Colonic mucosa (tissue), 4 donors: ENCODE measurements at regions of chr6 and their contacts with region 1.

Region 1: DNA sequence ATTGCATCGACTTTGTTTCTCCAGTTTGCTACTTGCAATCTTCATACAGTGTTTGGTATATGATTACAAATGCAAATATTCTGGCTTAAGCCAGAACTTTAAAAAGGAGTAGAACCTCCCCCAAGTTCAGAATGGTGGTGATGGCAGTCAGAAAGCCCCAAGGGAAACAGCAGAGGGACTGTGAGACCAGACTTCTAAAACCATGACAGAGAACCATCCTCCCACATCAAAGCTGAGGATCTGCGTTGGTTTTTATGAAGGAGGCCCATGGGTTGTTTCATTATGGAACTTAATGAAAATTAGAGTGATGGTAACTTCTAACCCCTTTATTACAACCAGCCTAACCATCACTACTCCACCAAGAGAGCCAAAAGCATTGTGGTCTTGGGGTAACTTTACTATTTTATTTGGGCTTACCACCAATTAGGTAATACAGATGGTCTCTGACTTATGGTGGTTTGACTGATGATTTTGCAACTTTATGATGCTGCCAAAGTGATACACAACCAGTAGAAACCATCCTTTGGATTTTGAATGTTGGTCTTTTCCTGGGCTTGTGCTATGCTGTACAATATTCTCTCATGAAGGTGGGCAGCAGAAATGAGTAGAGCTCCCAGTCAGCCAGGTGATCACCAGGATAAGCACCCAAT is 10.9 kb upstream of the MRS2 start:
- DNase-seq: no peak
- H3K4me3 ChIP-seq: no peak overlapping the region
- H3K27ac ChIP-seq: no peak overlapping the region
- H3K4me1 ChIP-seq: no peaks in the 10 kb centered on the region
- H3K27me3 ChIP-seq: no peaks in the 10 kb centered on the region
- CTCF ChIP-seq: no peak

Region 2: DNA sequence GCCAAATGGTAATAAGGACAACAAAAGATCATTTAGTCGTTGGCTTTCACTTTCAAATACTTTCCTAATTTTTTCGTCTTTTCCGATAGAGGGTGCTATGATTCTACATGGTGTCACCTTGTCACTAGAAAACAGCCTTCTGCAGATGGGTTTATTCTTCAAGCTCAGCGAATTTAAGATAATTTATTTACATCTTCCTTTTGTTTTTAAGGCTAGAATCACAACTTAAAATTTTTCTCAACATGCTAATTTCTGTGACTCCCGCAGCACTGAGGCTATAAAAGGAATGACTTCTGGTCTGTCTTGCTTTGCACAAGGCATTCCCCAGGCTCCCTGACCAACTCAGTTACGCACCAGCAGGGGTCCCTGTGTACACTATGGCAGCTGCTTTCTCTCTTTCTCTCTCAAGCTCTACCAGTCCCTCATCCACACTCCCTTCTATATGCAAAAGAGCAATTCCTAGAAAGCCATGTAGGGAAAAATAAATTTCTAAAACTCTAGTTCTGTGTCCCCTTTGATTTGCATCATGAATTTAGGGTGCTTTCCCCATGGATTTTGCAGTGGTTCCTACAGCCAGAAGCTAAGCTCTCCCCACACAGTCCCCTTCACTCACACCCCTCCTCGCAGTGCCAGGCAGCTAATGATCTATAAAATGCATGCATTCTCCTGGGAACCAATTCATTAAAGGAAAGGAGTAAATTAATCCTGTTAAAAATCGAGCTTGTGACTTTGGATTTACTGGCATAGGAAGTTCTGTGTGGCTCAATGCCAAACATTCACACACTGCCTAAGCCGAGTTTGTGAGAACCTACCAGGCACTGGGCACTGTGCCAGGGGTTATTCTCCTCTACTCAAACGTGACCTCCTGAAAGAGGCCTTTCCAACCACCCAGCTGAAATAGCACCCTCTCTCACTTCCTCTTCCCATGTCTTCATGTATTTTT is 108.6 kb before region 1 on chr6:
- intact Hi-C with region 1: loop called (anchors 2 kb)
- DNase-seq: peak; percentile 82
- H3K4me3 ChIP-seq: no peak overlapping the region
- H3K27ac ChIP-seq: no peak overlapping the region
- H3K4me1 ChIP-seq: no peaks in the 10 kb centered on the region
- H3K27me3 ChIP-seq: no peaks in the 10 kb centered on the region
- CTCF ChIP-seq: peak; percentile 43

Region 3: DNA sequence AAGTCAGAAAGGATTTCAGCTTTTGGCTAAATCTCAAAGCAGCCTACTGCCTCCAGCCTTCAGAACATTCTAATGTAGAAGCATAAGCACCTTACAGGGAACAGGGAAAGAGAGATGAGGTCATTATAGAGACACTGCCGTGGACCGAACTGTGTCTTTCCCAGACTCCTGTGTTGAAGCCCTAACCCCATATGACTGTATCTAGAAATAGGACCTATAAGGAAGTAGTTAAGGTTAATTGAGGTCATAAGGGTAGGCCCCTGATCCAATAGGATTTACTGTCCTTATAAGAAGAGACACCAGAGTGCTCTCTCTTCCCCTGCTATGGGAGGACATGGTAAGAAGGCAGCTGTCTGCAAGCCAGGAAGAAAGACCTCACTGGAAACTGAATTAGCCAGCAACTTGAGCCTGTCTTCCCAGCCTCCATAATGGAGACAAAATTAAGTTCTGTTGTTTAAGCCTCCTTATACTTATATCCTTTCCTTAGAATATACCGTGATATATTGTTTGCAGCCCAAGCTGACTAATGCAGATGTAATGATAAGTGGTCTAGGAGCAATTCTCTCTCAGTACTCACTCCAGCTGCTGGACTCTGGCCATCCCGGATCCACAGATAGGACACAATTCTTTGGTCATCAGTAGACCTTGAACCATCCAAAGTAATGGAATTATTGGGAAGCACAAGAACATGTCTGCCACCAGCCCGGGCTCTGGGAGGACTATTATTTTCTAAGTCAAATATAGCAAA is 174.3 kb after region 1 on chr6:
- intact Hi-C with region 1: no loop called
- DNase-seq: no peak
- H3K4me3 ChIP-seq: no peak overlapping the region
- H3K27ac ChIP-seq: no peak overlapping the region
- H3K4me1 ChIP-seq: no peaks in the 10 kb centered on the region
- H3K27me3 ChIP-seq: no peaks in the 10 kb centered on the region
- CTCF ChIP-seq: no peak